Activated CD4-positive, alpha-beta T cell treated with anti-CD3 and anti-CD28 coated beads, Interleukin-2, amount 10 ng/mL, durations not matched to agents 24 days and 14 days (primary cell): ENCODE measurements at regions of chr10 and their contacts with region 1.

Region 1: GRCh38 chr10:89332123-89332633 is 4.4 kb downstream of the IFIT3 start:
- DNase-seq: peak; percentile 86
- H3K4me3 Mint-ChIP-seq: peak overlapping the region; percentile 84
- H3K27ac Mint-ChIP-seq: peak overlapping the region; percentile 34
- H3K4me1 Mint-ChIP-seq: peaks cover 73% of the 10 kb centered on the region
- H3K27me3 Mint-ChIP-seq: peaks cover 16% of the 10 kb centered on the region

Region 2: GRCh38 chr10:89301721-89302445 is 30.3 kb before region 1 on chr10 and contains the start of gene IFIT2:
- intact Hi-C with region 1: loop called (anchors 1 kb)
- DNase-seq: peak; percentile 77
- H3K4me3 Mint-ChIP-seq: peak within 1 kb of the TSS; percentile 85
- H3K27ac Mint-ChIP-seq: peak within 1 kb of the TSS; percentile 72
- H3K4me1 Mint-ChIP-seq: peaks cover 34% of the 10 kb centered on the region
- H3K27me3 Mint-ChIP-seq: peaks cover 11% of the 10 kb centered on the region
- total RNA-seq, gene IFIT2: 0.40 and 0.54 TPM in 2 replicates

Region 3: GRCh38 chr10:89344156-89344555 is 12.0 kb after region 1 on chr10:
- intact Hi-C with region 1: loop called (anchors 1 kb)
- DNase-seq: no peak
- H3K4me3 Mint-ChIP-seq: no peak overlapping the region
- H3K27ac Mint-ChIP-seq: no peak overlapping the region
- H3K4me1 Mint-ChIP-seq: no peaks in the 10 kb centered on the region
- H3K27me3 Mint-ChIP-seq: peaks cover 43% of the 10 kb centered on the region

Region 4: GRCh38 chr10:89391917-89392756 is 60.0 kb after region 1 on chr10 and contains the start of gene IFIT1:
- intact Hi-C with region 1: loop called (anchors 1 kb)
- DNase-seq: peak; percentile 88
- H3K4me3 Mint-ChIP-seq: peak within 1 kb of the TSS; percentile 82
- H3K27ac Mint-ChIP-seq: peak within 1 kb of the TSS; percentile 67
- H3K4me1 Mint-ChIP-seq: peaks cover 31% of the 10 kb centered on the region
- H3K27me3 Mint-ChIP-seq: peaks cover 2% of the 10 kb centered on the region
- total RNA-seq, gene IFIT1: 0.58 and 1.0 TPM in 2 replicates